GM12878 (cell line): ENCODE measurements at regions of chr3 and their contacts with region 1.

Region 1: GRCh38 chr3:134600685-134601463 is 49.9 kb downstream of the KY start:
- DNase-seq: no peak
- ATAC-seq: peak; percentile 94
- H3K4me3 ChIP-seq: no peak overlapping the region
- H3K27ac ChIP-seq: no peak overlapping the region
- H3K4me1 ChIP-seq: no peaks in the 10 kb centered on the region
- H3K27me3 ChIP-seq: no peaks in the 10 kb centered on the region
- CTCF ChIP-seq: peak; percentile 91 to 96 (median 92)
- EP300 ChIP-seq: no peak
- POLR2A ChIP-seq: no peak
- RAD21 ChIP-seq: peak; percentile 90

Region 2: GRCh38 chr3:134427400-134428145 is 173.3 kb before region 1 on chr3:
- CTCF ChIA-PET with region 1: no interaction called
- POLR2A ChIA-PET with region 1: no interaction called
- RAD21 ChIA-PET with region 1: no interaction called
- SMC1A ChIA-PET with region 1: no interaction called
- in situ Hi-C with region 1: no loop called
- intact Hi-C with region 1: no loop called
- DNase-seq: no peak
- ATAC-seq: no peak
- H3K4me3 ChIP-seq: no peak overlapping the region
- H3K27ac ChIP-seq: no peak overlapping the region
- H3K4me1 ChIP-seq: no peaks in the 10 kb centered on the region
- H3K27me3 ChIP-seq: no peaks in the 10 kb centered on the region
- CTCF ChIP-seq: no peak
- EP300 ChIP-seq: no peak
- POLR2A ChIP-seq: no peak
- RAD21 ChIP-seq: no peak

Region 3: GRCh38 chr3:134485718-134486576 is 114.9 kb before region 1 on chr3 and contains the starts of genes ANAPC13 and CEP63:
- CTCF ChIA-PET with region 1: no interaction called
- POLR2A ChIA-PET with region 1: no interaction called
- RAD21 ChIA-PET with region 1: no interaction called
- SMC1A ChIA-PET with region 1: no interaction called
- in situ Hi-C with region 1: no loop called
- intact Hi-C with region 1: no loop called
- DNase-seq: peak; percentile 96
- ATAC-seq: peak; percentile 90
- H3K4me3 ChIP-seq: peak within 1 kb of the TSS; percentile 82
- H3K27ac ChIP-seq: peak within 1 kb of the TSS; percentile 87
- H3K4me1 ChIP-seq: peaks cover 6% of the 10 kb centered on the region
- H3K27me3 ChIP-seq: no peaks in the 10 kb centered on the region
- CTCF ChIP-seq: no peak
- EP300 ChIP-seq: 0 out of 4 replicates have a peak, but pooled peaks of 1 of the 2 experiments have one; percentile 7
- POLR2A ChIP-seq: peak; percentile 89
- RAD21 ChIP-seq: no peak
- polyA plus RNA-seq, gene ANAPC13: 129 to 139 TPM
- polyA plus RNA-seq, gene CEP63: 14.0 to 16.4 TPM

Region 4: GRCh38 chr3:134590766-134591165 is 10.1 kb before region 1 on chr3:
- CTCF ChIA-PET with region 1: interaction called, 10 read pairs
- POLR2A ChIA-PET with region 1: no interaction called
- RAD21 ChIA-PET with region 1: no interaction called
- SMC1A ChIA-PET with region 1: interaction called, 5 read pairs
- in situ Hi-C with region 1: no loop called
- intact Hi-C with region 1: no loop called
- DNase-seq: no peak
- ATAC-seq: no peak
- H3K4me3 ChIP-seq: no peak overlapping the region
- H3K27ac ChIP-seq: no peak overlapping the region
- H3K4me1 ChIP-seq: no peaks in the 10 kb centered on the region
- H3K27me3 ChIP-seq: no peaks in the 10 kb centered on the region
- CTCF ChIP-seq: no peak
- EP300 ChIP-seq: no peak
- POLR2A ChIP-seq: no peak
- RAD21 ChIP-seq: no peak

Region 5: DNA sequence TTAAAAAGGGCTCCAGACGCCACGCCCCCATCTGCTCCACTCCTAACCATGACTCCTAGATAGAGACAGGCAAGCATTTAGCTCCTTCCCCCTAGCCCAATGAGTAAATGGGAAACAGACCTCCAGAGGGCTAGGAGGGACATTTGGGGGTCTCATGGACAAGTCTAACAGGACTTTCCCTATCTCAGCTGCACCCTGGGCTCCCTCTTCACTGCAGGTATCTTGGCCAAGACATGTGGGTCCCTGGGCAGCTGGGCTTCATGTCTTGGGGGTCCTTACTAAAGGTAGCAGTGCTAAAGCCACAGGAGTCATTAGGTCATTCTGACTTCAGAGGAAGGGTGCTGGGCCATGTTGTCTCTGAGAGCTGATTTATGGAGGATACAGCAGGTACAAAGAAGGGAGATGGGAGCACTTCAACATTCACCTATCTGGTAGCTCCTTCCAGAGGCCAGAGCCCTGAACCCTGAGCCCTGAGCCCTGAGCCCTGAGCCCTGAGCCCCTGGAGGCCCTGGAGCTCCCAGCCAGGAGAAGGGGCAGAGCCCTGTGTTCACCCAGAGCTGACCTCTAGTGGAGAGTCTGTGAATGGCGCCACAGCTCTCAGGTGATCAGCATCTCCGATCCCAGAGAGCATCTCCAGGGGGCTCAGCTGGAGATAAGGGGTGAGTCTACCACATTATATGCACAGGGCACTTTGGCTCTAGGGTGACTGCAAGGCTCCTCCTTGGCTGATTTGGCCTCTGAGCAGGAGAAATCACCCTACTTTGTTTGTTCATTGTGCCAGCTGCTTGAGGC is 154.1 kb after region 1 on chr3:
- CTCF ChIA-PET with region 1: interaction called, 22 read pairs
- POLR2A ChIA-PET with region 1: no interaction called
- RAD21 ChIA-PET with region 1: interaction called, 7 read pairs
- SMC1A ChIA-PET with region 1: interaction called, 17 read pairs
- in situ Hi-C with region 1: no loop called
- intact Hi-C with region 1: loop called (anchors 1 kb)
- DNase-seq: no peak
- ATAC-seq: peak; percentile 99
- H3K4me3 ChIP-seq: no peak overlapping the region
- H3K27ac ChIP-seq: no peak overlapping the region
- H3K4me1 ChIP-seq: no peaks in the 10 kb centered on the region
- H3K27me3 ChIP-seq: no peaks in the 10 kb centered on the region; a peak in 1 of 4 replicates
- CTCF ChIP-seq: peak; percentile 63 to 94 (median 82)
- EP300 ChIP-seq: no peak
- POLR2A ChIP-seq: no peak
- RAD21 ChIP-seq: peak; percentile 41; the same call in 1 of the 2 replicates

Region 6: GRCh38 chr3:135887220-135887619 is 1286.3 kb after region 1 on chr3:
- CTCF ChIA-PET with region 1: no interaction called
- POLR2A ChIA-PET with region 1: interaction called, 3 read pairs
- RAD21 ChIA-PET with region 1: no interaction called
- SMC1A ChIA-PET with region 1: no interaction called
- in situ Hi-C with region 1: loop called (anchors 5 kb)
- intact Hi-C with region 1: no loop called
- DNase-seq: no peak
- ATAC-seq: no peak
- H3K4me3 ChIP-seq: no peak overlapping the region
- H3K27ac ChIP-seq: no peak overlapping the region
- H3K4me1 ChIP-seq: no peaks in the 10 kb centered on the region
- H3K27me3 ChIP-seq: no peaks in the 10 kb centered on the region; a peak in 1 of 4 replicates
- CTCF ChIP-seq: no peak
- EP300 ChIP-seq: no peak
- POLR2A ChIP-seq: no peak
- RAD21 ChIP-seq: no peak

Region 7: GRCh38 chr3:136042608-136043221 is 1441.8 kb after region 1 on chr3:
- CTCF ChIA-PET with region 1: interaction called, 27 read pairs
- POLR2A ChIA-PET with region 1: no interaction called
- RAD21 ChIA-PET with region 1: interaction called, 12 read pairs
- SMC1A ChIA-PET with region 1: interaction called, 6 read pairs
- in situ Hi-C with region 1: no loop called
- intact Hi-C with region 1: loop called (anchors 5 kb)
- DNase-seq: no peak
- ATAC-seq: peak; percentile 55; the same call in 2 of the 3 replicates
- H3K4me3 ChIP-seq: no peak overlapping the region
- H3K27ac ChIP-seq: no peak overlapping the region
- H3K4me1 ChIP-seq: no peaks in the 10 kb centered on the region
- H3K27me3 ChIP-seq: no peaks in the 10 kb centered on the region; a peak in 1 of 4 replicates
- CTCF ChIP-seq: peak; percentile 28 to 57 (median 48); a peak in 5 of 6 replicates
- EP300 ChIP-seq: no peak
- POLR2A ChIP-seq: no peak
- RAD21 ChIP-seq: peak; percentile 53